ENCODE measurements at regions of chr16 and their contacts with region 1.

Region 1: DNA sequence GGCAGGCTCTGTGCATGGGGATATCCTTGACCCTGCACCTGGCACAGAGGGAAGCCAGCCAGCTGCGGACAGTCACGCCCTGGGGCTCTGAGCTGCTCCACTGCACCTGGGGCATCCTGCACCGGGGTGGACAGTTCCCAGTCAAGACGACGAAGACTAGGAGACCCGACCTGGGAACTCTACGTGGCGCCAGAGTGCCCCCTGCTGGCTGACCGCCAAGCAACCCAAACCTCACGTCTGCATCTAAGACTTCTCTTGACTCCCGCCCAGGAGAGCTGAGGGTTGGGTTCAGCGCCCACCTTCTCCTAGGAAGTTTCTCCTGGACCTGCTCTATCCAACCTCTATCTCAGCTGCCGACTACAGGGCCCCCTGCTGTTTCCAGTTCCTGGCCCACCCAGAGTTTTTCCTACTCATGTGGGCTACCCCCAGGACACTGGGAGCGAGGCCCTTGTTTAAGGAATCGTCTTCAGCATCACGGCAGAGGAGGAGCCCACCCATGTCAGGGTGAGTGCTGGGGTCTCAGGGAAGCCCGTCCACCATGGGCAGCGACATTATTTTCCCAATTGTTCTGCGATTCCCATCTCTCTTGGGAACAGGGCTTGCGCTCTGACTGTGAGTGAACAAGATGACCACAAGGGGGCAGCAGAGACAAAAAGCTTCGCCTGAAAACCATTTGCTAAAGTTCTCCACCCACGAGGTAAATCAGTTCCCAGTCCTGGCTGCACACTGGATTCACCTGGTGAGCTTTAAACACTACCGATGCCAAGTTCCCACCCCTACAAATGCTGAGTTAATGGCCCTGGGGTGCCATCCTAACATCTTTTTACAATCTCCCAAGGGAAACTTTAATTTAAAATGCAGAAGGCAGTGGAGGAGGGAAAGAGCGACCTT is 29.3 kb downstream of the TLE7 start:
- DNase-seq: peak; percentile 29 to 74
- ATAC-seq: peak; percentile 70 to 90 (median 77)
- H3K4me3 ChIP-seq: no peak overlapping the region
- H3K27ac ChIP-seq: no peak overlapping the region
- H3K4me1 ChIP-seq: peaks cover 0 to 7% (median 0%) of the 10 kb centered on the region in 9 donors
- H3K27me3 ChIP-seq: peaks cover 0 to 71% (median 56%) of the 10 kb centered on the region in 7 donors
- CTCF ChIP-seq: peak; percentile 77 to 92 (median 86)

Region 2: GRCh38 chr16:71339236-71340176 is 73.0 kb before region 1 on chr16:
- intact Hi-C with region 1: loop called in 1 of 10 experiments (anchors 10 kb)
- DNase-seq: no peak
- ATAC-seq: no peak
- H3K4me3 ChIP-seq: no peak overlapping the region
- H3K27ac ChIP-seq: no peak overlapping the region
- H3K4me1 ChIP-seq: no peaks in the 10 kb centered on the region
- H3K27me3 ChIP-seq: peaks cover 0 to 29% (median 6%) of the 10 kb centered on the region in 7 donors
- CTCF ChIP-seq: no peak

Region 3: DNA sequence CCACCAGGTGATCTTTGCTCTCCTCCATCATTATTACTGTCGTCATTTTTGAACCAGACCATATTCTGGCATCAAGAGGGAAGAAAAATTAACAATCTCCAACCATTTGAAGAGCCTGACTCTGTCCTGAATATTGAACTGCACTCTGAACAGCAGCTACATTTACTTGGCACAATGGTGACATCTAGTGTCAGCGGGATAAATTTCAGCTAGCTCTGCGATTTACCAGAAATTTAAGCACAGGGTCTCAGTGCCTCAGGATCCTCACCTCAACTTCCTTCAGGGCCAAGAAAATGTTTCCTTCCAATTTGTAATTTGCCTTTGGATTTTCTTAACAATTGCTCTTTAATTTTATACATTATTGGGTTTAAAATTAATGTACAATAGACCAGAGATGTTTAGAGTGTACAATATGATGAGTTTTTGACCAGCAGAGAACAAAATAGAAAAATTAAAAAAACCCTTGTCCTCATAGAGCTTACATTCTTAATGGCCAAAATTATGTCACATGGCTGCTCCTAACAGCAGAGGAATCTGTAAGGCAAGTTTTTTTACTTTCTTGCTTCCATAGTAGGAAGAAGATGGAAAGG is 87.4 kb after region 1 on chr16:
- intact Hi-C with region 1: loop called (anchors 1 to 5 kb)
- DNase-seq: peak in 1 of 2 donors; percentile 26
- ATAC-seq: peak in 2 of 8 donors; percentile 35 to 58
- H3K4me3 ChIP-seq: no peak overlapping the region
- H3K27ac ChIP-seq: no peak overlapping the region
- H3K4me1 ChIP-seq: no peaks in the 10 kb centered on the region
- H3K27me3 ChIP-seq: peaks cover 0 to 15% (median 7%) of the 10 kb centered on the region in 7 donors
- CTCF ChIP-seq: peak; percentile 44 to 75 (median 68)

Region 4: GRCh38 chr16:71610936-71611871 is 198.7 kb after region 1 on chr16:
- intact Hi-C with region 1: loop called in 7 of 10 experiments (anchors 2 to 5 kb)
- DNase-seq: peak; percentile 26 to 70
- ATAC-seq: peak in 6 of 8 donors; percentile 64 to 84 (median 76)
- H3K4me3 ChIP-seq: no peak overlapping the region
- H3K27ac ChIP-seq: no peak overlapping the region
- H3K4me1 ChIP-seq: peaks cover 0 to 4% (median 0%) of the 10 kb centered on the region in 9 donors
- H3K27me3 ChIP-seq: peaks cover 0 to 64% (median 39%) of the 10 kb centered on the region in 7 donors
- CTCF ChIP-seq: peak; percentile 55 to 92 (median 79)